ENCODE measurements at regions of chr17 and their contacts with region 1.

Region 1: DNA sequence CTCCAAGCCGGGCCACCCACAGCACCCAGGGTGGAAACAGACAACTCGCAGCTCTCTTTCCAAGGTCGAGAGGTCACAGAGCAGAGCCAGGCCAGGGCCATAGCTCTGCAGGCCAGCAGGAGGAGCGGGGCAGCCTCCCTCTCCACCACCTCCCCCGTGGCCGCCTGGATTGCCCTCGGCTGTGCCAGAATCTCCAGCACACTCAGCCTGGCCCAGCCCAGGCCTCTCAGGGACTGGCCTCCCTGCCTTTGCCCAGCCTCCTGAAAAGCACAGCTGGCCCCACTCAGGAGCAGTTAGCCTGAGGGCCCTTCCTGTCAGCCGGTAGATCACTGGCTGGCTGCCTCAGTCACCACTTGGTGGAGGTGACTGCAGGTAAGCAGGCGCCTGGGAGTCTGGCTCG is 85.8 kb upstream of the SEC14L1 start:
- DNase-seq: no peak
- H3K4me3 ChIP-seq: no peak overlapping the region
- H3K4me3 Mint-ChIP-seq: no peak overlapping the region
- H3K27ac Mint-ChIP-seq: no peak overlapping the region
- H3K4me1 ChIP-seq: no peaks in the 10 kb centered on the region
- H3K4me1 Mint-ChIP-seq: no peaks in the 10 kb centered on the region
- H3K27me3 ChIP-seq: no peaks in the 10 kb centered on the region; the same call in 1 of the 2 replicates
- H3K27me3 Mint-ChIP-seq: no peaks in the 10 kb centered on the region
- CTCF ChIP-seq: no peak

Region 2: DNA sequence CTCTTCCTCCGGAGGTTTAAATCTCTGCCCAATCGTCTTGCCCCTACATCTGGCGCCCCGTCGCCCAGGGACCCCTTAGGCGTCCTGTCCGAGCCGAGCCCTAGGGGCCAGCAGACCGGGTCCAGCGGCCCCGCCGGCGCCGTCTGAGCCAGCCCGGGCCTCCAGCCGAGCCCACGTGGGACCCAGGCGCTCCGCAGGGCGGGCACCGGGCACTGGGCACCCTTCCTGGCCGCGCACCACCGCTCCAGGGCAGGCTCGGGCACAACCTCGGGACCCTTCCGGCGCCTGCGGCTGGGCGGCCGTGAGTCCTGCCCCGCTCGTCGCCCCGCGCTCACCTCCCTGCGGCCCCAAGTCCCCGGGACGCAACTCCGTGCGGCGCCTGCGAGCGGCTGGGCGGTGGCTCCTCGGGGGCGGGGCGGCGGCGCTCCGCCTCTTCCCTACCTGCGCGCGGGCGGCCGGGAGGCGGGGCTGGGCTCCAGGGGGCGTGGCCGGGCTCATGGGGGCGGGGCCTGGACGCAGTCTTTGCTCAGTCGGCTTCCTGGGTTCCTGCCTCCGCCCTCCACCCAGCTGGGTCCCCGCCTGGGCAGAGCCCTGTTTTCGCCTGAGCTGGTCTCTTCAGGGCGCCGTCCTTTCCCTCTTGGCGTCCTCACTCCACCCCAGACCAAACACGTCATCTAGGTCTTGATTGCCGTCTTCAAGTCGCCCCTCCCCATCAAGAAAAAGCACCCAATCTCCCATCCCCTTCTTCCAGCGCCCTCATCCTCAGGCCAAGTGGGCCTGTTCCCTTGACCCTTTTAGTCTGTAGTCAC is 553.7 kb before region 1 on chr17 and contains the start of gene RHBDF2:
- CTCF ChIA-PET with region 1: interaction called, 10 read pairs
- POLR2A ChIA-PET with region 1: no interaction called
- intact Hi-C with region 1: no loop called
- DNase-seq: peak; percentile 92 to 97
- H3K4me3 ChIP-seq: peak within 1 kb of the TSS; percentile 64
- H3K4me3 Mint-ChIP-seq: peak within 1 kb of the TSS; percentile 87
- H3K27ac Mint-ChIP-seq: peak within 1 kb of the TSS; percentile 91
- H3K4me1 ChIP-seq: peaks cover 35% of the 10 kb centered on the region
- H3K4me1 Mint-ChIP-seq: peaks cover 21% of the 10 kb centered on the region
- H3K27me3 ChIP-seq: no peaks in the 10 kb centered on the region
- H3K27me3 Mint-ChIP-seq: no peaks in the 10 kb centered on the region
- CTCF ChIP-seq: no peak
- total RNA-seq, gene RHBDF2: 33.8 and 37.2 TPM in 2 replicates

Region 3: DNA sequence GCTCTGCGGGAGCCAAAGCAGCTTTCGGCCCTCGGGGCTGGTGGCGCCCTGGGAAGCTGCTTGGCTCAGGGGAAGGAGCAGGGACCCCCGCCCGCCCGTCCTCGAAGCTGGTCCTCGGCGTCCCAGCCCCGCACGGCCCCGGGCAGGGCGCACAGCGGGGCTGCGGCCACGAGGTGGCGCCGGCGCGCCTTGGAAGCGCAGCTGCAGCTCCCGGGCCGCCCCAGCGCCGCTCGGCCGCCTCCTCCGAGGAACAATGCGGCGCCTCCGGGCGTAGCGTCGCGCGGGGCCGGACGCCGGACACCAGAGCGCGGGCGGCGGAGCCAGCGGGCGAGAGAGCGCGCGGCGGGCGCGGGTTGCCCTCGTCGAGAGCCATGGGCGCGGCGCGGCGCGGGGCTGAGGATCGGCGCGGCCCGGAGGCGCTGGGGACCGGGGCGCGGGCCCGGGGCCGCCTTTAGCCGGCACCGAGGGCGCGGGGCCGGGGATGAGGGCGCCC is 186.7 kb before region 1 on chr17 and contains the start of gene MGAT5B:
- CTCF ChIA-PET with region 1: interaction called, 39 read pairs
- POLR2A ChIA-PET with region 1: no interaction called
- intact Hi-C with region 1: loop called (anchors 1 kb)
- DNase-seq: peak; percentile 80 to 93
- H3K4me3 ChIP-seq: peak within 1 kb of the TSS; percentile 44
- H3K4me3 Mint-ChIP-seq: peak within 1 kb of the TSS; percentile 62
- H3K27ac Mint-ChIP-seq: no peak within 1 kb of the TSS
- H3K4me1 ChIP-seq: peaks cover 17% of the 10 kb centered on the region; the same call in 1 of the 2 replicates
- H3K4me1 Mint-ChIP-seq: peaks cover 13% of the 10 kb centered on the region
- H3K27me3 ChIP-seq: no peaks in the 10 kb centered on the region
- H3K27me3 Mint-ChIP-seq: no peaks in the 10 kb centered on the region
- CTCF ChIP-seq: peak; percentile 59 to 92
- total RNA-seq, gene MGAT5B: 8.9 and 9.1 TPM in 2 replicates

Region 4: GRCh38 chr17:77011173-77012011 is 43.5 kb before region 1 on chr17:
- CTCF ChIA-PET with region 1: interaction called, 4 read pairs
- POLR2A ChIA-PET with region 1: no interaction called
- intact Hi-C with region 1: loop called (anchors 5 kb)
- DNase-seq: peak in 1 of 2 experiments; percentile 51
- H3K4me3 ChIP-seq: no peak overlapping the region
- H3K4me3 Mint-ChIP-seq: no peak overlapping the region
- H3K27ac Mint-ChIP-seq: no peak overlapping the region
- H3K4me1 ChIP-seq: no peaks in the 10 kb centered on the region
- H3K4me1 Mint-ChIP-seq: no peaks in the 10 kb centered on the region
- H3K27me3 ChIP-seq: no peaks in the 10 kb centered on the region
- H3K27me3 Mint-ChIP-seq: no peaks in the 10 kb centered on the region
- CTCF ChIP-seq: peak; percentile 53 to 54

Region 5: GRCh38 chr17:77036807-77037381 is 18.0 kb before region 1 on chr17:
- CTCF ChIA-PET with region 1: interaction called, 56 read pairs
- POLR2A ChIA-PET with region 1: no interaction called
- intact Hi-C with region 1: loop called (anchors 2 kb)
- DNase-seq: peak; percentile 70 to 75
- H3K4me3 ChIP-seq: no peak overlapping the region
- H3K4me3 Mint-ChIP-seq: peak overlapping the region; percentile 50
- H3K27ac Mint-ChIP-seq: no peak overlapping the region
- H3K4me1 ChIP-seq: no peaks in the 10 kb centered on the region
- H3K4me1 Mint-ChIP-seq: peaks cover 14% of the 10 kb centered on the region
- H3K27me3 ChIP-seq: no peaks in the 10 kb centered on the region
- H3K27me3 Mint-ChIP-seq: peaks cover 2% of the 10 kb centered on the region
- CTCF ChIP-seq: peak in 1 of 2 experiments; percentile 53

Region 6: DNA sequence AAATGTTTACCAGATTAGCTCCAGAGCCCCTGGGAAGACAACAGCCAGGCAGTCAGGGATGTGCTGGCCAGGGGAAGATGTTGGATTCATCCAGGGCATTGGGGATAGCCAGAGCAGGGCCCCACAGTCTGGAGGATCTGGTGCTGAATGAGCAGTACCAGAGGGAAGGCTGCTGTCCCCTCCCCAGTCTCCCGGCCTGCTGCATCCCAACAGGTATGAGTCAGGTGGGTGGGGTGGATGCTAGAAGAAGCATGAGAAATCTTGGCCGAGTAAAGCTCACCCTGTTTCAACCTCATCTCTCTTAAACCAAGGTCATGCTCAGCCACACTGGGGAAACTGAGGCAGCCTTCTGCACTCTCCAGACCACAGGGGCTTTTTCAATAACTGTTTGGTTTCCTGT is 14.0 kb after region 1 on chr17:
- CTCF ChIA-PET with region 1: interaction called, 17 read pairs
- POLR2A ChIA-PET with region 1: no interaction called
- intact Hi-C with region 1: no loop called
- DNase-seq: no peak
- H3K4me3 ChIP-seq: no peak overlapping the region
- H3K4me3 Mint-ChIP-seq: no peak overlapping the region
- H3K27ac Mint-ChIP-seq: no peak overlapping the region
- H3K4me1 ChIP-seq: no peaks in the 10 kb centered on the region
- H3K4me1 Mint-ChIP-seq: peaks cover 6% of the 10 kb centered on the region
- H3K27me3 ChIP-seq: 0 out of 2 replicates have a peak, but pooled peaks cover 1% of the 10 kb centered on the region
- H3K27me3 Mint-ChIP-seq: peaks cover 13% of the 10 kb centered on the region
- CTCF ChIP-seq: no peak

Region 7: GRCh38 chr17:77165577-77165976 is 110.6 kb after region 1 on chr17:
- CTCF ChIA-PET with region 1: no interaction called
- POLR2A ChIA-PET with region 1: no interaction called
- intact Hi-C with region 1: no loop called
- DNase-seq: no peak
- H3K4me3 ChIP-seq: no peak overlapping the region
- H3K4me3 Mint-ChIP-seq: no peak overlapping the region
- H3K27ac Mint-ChIP-seq: no peak overlapping the region
- H3K4me1 ChIP-seq: peaks cover 14% of the 10 kb centered on the region
- H3K4me1 Mint-ChIP-seq: peaks cover 30% of the 10 kb centered on the region
- H3K27me3 ChIP-seq: no peaks in the 10 kb centered on the region
- H3K27me3 Mint-ChIP-seq: no peaks in the 10 kb centered on the region
- CTCF ChIP-seq: no peak

Region 8: GRCh38 chr17:77322514-77323412 is 267.8 kb after region 1 on chr17:
- CTCF ChIA-PET with region 1: no interaction called
- POLR2A ChIA-PET with region 1: no interaction called
- intact Hi-C with region 1: no loop called
- DNase-seq: peak; percentile 81 to 87
- H3K4me3 ChIP-seq: no peak overlapping the region
- H3K4me3 Mint-ChIP-seq: peak overlapping the region; percentile 56
- H3K27ac Mint-ChIP-seq: peak overlapping the region; percentile 96
- H3K4me1 ChIP-seq: peaks cover 59% of the 10 kb centered on the region
- H3K4me1 Mint-ChIP-seq: peaks cover 61% of the 10 kb centered on the region
- H3K27me3 ChIP-seq: no peaks in the 10 kb centered on the region
- H3K27me3 Mint-ChIP-seq: no peaks in the 10 kb centered on the region
- CTCF ChIP-seq: no peak